ENCODE measurements at regions of chr9 and their contacts with region 1.

Region 1: DNA sequence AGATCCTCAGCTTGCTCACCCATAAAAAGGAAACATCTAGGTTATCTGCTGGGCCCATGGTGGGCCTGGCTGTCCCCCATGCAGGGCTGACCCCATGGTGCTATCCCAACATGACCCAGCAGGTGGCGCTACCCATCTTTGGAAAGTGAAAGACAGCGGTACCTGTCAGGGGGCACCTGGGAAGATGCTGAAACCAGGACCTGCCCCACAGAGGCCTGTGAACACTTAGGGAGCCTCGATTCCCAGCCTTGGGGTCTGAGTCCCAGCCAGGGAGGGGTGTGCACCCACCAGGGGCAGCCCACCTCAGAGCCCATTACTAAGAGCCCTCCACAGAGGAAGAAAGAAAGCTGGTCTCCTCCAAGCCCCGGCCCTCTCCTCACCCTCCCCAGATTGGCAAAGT is 46.6 kb upstream of the IPPK start:
- DNase-seq: peak; percentile 64
- H3K4me3 Mint-ChIP-seq: peak overlapping the region; percentile 11
- H3K27ac Mint-ChIP-seq: peak overlapping the region; percentile 77
- H3K4me1 Mint-ChIP-seq: peaks cover 7% of the 10 kb centered on the region
- H3K27me3 Mint-ChIP-seq: no peaks in the 10 kb centered on the region
- CTCF ChIP-seq: peak; percentile 87

Region 2: GRCh38 chr9:92728831-92729734 is 12.5 kb after region 1 on chr9:
- CTCF ChIA-PET with region 1: interaction called, 20 read pairs
- POLR2A ChIA-PET with region 1: interaction called, 4 read pairs
- intact Hi-C with region 1: no loop called
- DNase-seq: no peak
- H3K4me3 Mint-ChIP-seq: no peak overlapping the region
- H3K27ac Mint-ChIP-seq: no peak overlapping the region
- H3K4me1 Mint-ChIP-seq: peaks cover 11% of the 10 kb centered on the region
- H3K27me3 Mint-ChIP-seq: no peaks in the 10 kb centered on the region
- CTCF ChIP-seq: no peak

Region 3: DNA sequence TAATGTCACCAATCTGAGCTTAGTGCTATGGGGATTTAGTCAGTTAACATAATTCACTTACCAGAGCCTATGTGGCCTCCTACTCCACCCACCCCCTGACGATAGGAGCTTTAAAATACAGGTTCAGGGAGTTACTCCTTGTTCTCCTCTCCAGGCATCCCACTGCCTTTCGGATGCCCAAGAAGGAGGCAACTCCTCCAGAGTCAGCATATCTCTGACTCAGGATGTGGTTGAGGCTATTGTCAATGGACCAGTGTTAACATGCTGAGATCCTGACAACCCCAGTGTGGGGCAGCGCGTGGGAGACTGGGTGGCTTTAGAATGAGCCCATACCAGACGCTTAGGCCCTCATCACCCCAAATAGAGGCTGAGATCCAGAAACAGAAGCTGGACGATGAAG is 20.6 kb after region 1 on chr9:
- CTCF ChIA-PET with region 1: interaction called, 13 read pairs
- POLR2A ChIA-PET with region 1: no interaction called
- intact Hi-C with region 1: no loop called
- DNase-seq: no peak
- H3K4me3 Mint-ChIP-seq: no peak overlapping the region
- H3K27ac Mint-ChIP-seq: no peak overlapping the region
- H3K4me1 Mint-ChIP-seq: peaks cover 27% of the 10 kb centered on the region
- H3K27me3 Mint-ChIP-seq: no peaks in the 10 kb centered on the region
- CTCF ChIP-seq: no peak

Region 4: DNA sequence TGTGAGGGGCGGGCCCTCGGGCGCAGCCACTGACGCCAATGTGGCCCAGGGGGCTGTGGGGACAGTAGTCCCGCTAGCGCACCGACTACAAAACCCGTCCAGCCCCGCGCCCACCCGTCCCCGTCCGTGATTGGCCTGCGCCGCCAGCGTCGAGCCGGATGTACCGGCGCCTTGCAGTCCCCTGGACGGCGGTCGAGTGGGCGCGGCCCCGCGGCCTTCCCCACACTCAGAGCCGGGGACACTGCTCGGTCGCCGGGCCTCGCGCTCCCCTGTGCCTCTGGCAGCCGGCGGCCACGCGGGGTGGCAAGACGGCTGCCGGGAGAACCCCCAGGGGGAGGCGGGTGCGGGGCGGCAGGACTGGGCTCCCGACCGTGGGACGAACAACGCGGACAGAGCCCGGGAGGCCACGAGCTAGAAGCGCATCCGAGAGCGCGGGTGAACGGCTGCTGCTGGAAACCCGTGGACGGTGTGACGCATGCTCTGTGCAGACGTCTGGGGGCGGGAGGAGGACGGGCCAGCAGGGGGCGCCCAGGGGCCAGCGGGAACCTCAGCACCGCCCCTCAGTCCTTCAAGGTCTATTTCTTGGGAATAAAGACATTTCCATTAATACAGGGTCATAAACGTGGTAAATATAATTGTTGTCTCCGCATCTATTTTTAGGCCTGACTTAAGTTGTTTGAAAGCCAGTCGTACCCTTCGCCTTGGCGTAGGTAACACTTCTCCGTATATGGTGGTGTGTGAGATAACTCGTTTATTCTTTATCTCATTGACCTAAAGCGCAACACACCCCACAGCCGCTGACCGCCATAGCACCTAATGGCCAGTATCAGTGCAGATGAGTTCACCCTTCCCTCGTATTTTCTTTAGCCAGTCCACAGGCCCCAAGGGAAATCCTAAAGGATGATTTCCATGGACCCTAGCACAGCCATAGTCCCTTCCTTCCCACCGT is 48.7 kb after region 1 on chr9:
- CTCF ChIA-PET with region 1: interaction called, 11 read pairs
- POLR2A ChIA-PET with region 1: interaction called, 10 read pairs
- intact Hi-C with region 1: loop called (anchors 1 kb)
- DNase-seq: peak; percentile 97
- H3K4me3 Mint-ChIP-seq: peak overlapping the region; percentile 85
- H3K27ac Mint-ChIP-seq: peak overlapping the region; percentile 29
- H3K4me1 Mint-ChIP-seq: peaks cover 52% of the 10 kb centered on the region
- H3K27me3 Mint-ChIP-seq: no peaks in the 10 kb centered on the region
- CTCF ChIP-seq: peak; percentile 96

Measured in MCF 10A (cell line).